SK-N-SH (cell line): ENCODE measurements at regions of chr2 and their contacts with region 1.

Region 1: DNA sequence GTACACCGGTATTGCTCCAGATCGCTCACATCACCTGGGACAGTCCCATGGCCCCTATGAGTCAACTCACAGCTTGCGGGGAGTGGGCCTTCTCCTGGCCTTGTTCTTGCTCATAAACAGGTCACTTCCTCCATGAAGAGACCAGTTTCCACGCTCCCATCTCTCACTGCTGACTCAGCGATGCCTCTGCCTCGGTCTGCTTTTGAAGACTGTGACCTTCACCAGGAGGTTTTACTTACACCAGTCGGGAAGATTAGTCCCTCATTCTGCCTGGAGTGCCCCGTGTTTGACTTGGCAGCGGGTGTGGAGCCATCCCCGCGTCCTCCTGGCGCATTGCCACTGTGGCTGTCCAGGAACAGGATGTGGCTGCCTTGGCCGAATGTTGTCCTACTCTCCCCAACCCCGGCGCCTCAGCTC is 159.8 kb downstream of the RHBDD1 start:
- DNase-seq: no peak
- H3K4me3 ChIP-seq: no peak overlapping the region; a peak in 1 of 4 replicates
- H3K27ac ChIP-seq: no peak overlapping the region
- H3K4me1 ChIP-seq: peaks cover 0 to 2% of the 10 kb centered on the region in 2 experiments; a peak in 1 of 4 replicates
- H3K27me3 ChIP-seq: no peaks in the 10 kb centered on the region
- CTCF ChIP-seq: no peak
- EP300 ChIP-seq: no peak
- RAD21 ChIP-seq: no peak

Region 2: DNA sequence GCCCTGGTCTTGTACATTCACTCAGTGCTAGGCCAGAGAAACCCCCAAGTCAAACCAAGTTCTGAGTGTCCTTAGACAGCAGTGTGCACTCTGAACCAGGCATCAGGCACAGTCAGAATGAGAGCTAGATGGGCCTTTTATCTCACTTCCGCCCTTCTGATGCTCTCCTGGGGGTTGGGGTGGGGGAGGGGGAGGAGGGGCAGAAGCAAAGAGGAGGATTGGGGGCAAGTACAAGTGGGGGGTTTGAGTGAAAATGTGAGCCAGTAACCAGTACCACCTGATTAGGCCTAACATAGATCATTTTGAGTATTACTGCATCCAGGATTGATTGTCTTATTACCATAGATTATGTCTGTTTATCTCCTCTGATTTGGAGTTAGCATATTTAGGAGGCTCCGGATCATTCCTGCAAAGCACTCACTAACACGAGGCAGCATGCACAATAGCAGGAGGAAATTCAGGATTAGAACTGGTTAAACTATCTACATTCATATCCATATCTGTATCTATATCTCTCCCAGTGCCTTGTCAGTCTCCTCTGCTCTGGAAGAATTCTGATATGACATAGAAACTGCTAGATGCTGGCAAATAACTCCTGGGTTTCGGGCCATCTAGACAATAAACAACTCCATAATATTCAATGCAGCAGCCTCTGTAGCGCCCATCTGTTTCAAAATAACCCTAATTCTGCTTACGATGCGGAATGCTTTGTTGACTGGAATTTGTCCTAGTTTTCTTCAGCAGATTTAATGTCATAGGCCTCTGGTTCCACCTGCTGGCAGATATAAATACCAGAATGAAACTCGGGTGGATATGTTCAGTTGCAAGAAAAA is 10.7 kb before region 1 on chr2:
- CTCF ChIA-PET with region 1: interaction called, 10 read pairs
- POLR2A ChIA-PET with region 1: no interaction called
- DNase-seq: peak; percentile 53
- H3K4me3 ChIP-seq: no peak overlapping the region
- H3K27ac ChIP-seq: no peak overlapping the region
- H3K4me1 ChIP-seq: peaks cover 0 to 5% of the 10 kb centered on the region in 2 experiments; a peak in 2 of 4 replicates
- H3K27me3 ChIP-seq: no peaks in the 10 kb centered on the region
- CTCF ChIP-seq: peak; percentile 78
- EP300 ChIP-seq: no peak
- RAD21 ChIP-seq: peak; percentile 93